SK-N-SH (cell line): ENCODE measurements at regions of chrX and their contacts with region 1.

Region 1: GRCh38 chrX:115690511-115691216 is 129.7 kb downstream of the PLS3 start:
- DNase-seq: peak; percentile 64
- H3K4me3 ChIP-seq: no peak overlapping the region
- H3K27ac ChIP-seq: peak overlapping the region in 1 of 2 experiments; percentile 64; a peak in 2 of 4 replicates
- H3K4me1 ChIP-seq: no peaks in the 10 kb centered on the region
- H3K27me3 ChIP-seq: peaks cover 15% of the 10 kb centered on the region; the same call in 1 of the 2 replicates
- CTCF ChIP-seq: peak; percentile 93
- EP300 ChIP-seq: no peak
- RAD21 ChIP-seq: peak; percentile 66

Region 2: GRCh38 chrX:115392031-115392430 is 298.6 kb before region 1 on chrX:
- CTCF ChIA-PET with region 1: no interaction called
- POLR2A ChIA-PET with region 1: no interaction called
- DNase-seq: no peak
- H3K4me3 ChIP-seq: no peak overlapping the region
- H3K27ac ChIP-seq: no peak overlapping the region
- H3K4me1 ChIP-seq: no peaks in the 10 kb centered on the region
- H3K27me3 ChIP-seq: no peaks in the 10 kb centered on the region; the same call in 1 of the 2 replicates
- CTCF ChIP-seq: no peak
- EP300 ChIP-seq: no peak
- RAD21 ChIP-seq: no peak

Region 3: DNA sequence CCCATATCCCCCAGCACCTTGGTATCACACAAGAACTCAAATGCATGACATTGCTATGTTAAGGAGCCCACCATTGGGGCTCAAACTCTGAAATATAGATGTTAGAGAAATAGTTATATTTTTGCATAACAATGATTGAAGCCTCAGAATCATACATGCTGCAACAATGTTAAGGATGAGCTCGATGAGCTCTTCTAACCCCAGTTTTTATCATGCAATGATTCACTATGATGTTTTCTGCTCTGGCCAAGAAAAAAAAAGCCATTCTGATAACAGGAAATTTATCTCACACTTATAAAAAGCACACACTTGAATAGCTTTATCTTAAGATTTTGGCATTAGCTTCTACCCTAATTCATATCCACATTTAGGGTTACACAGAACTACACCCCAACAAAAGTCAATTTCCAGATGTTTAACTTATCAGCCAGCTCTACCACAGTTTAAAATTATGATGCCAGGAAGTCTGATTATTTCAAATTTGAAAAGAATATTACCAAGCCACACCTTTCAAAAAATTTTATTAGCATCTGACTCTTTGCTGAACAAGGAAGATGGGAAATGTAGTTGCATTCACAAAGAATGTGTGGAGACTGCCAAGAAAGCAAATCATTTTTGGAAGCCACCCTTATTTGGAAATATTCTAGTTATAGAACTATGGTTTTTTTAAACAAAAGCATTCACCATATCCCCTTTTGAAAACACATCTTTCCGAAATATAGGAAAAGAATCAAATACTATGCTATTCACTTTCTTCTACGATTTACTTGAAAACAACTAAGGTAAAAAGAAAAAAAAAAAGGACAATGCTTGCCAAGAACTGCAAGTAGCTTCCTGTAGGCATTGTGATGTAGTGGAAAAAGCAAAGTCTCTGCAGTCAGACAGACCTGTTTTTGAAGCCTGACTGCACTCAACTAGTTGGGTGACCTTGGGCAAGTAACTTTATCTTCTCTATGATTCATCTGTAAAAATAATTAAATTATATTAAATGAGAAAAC is 230.5 kb before region 1 on chrX:
- CTCF ChIA-PET with region 1: no interaction called
- POLR2A ChIA-PET with region 1: no interaction called
- DNase-seq: no peak
- H3K4me3 ChIP-seq: no peak overlapping the region
- H3K27ac ChIP-seq: peak overlapping the region in 1 of 2 experiments; percentile 2; a peak in 2 of 4 replicates
- H3K4me1 ChIP-seq: no peaks in the 10 kb centered on the region
- H3K27me3 ChIP-seq: 0 out of 2 replicates have a peak, but pooled peaks cover 6% of the 10 kb centered on the region
- CTCF ChIP-seq: no peak
- EP300 ChIP-seq: no peak
- RAD21 ChIP-seq: no peak

Region 4: DNA sequence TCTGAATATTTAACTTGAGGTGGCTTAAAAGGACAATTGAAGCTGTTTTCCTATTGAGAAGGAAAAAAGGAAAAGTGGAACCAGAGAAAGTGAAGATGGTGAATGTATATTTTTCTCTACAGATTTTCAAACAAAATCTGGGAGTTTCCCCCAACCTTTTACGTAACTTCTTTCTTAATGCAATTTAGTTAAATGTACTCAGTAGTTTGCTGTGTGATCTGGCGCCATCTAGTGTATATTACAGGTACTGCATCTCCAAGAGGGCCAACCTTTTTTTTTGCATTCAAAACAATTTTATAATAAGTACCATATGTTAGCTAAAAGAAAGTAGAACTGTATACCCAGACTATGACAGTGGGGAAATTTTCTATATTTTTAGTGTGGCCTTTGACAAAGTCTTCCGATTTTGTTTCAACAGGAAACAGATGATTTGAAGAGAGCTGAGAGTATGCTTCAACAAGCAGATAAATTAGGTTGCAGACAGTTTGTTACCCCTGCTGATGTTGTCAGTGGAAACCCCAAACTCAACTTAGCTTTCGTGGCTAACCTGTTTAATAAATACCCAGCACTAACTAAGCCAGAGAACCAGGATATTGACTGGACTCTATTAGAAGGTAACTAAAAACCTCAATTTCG is 47.7 kb before region 1 on chrX:
- CTCF ChIA-PET with region 1: interaction called, 11 read pairs
- POLR2A ChIA-PET with region 1: no interaction called
- DNase-seq: peak; percentile 48
- H3K4me3 ChIP-seq: peak overlapping the region in 1 of 2 experiments; percentile 33; a peak in 1 of 4 replicates
- H3K27ac ChIP-seq: peak overlapping the region; percentile 34 to 51; a peak in 1 of 4 replicates
- H3K4me1 ChIP-seq: no peaks in the 10 kb centered on the region; a peak in 1 of 4 replicates
- H3K27me3 ChIP-seq: peaks cover 3% of the 10 kb centered on the region; the same call in 1 of the 2 replicates
- CTCF ChIP-seq: peak; percentile 98
- EP300 ChIP-seq: no peak
- RAD21 ChIP-seq: peak; percentile 90

Region 5: DNA sequence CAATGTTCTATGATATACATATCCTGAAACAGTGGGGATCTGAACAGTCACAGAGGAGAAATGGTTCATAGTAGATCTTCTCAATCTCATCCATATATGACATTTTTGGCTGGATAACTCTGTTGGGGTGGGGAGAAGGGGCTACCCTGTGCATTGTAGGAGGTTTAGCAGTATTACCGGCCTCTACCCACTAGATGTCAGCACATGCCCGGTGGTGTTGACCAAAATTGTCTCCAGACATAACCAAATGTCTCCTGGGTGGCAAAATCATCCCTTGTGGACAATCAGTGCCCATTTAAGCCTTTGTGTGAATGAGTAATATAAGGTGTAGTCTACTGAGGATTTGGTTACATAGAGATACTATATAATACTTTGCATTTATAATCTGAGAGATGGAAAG is 39.7 kb before region 1 on chrX:
- CTCF ChIA-PET with region 1: interaction called, 37 read pairs
- POLR2A ChIA-PET with region 1: no interaction called
- DNase-seq: peak; percentile 52
- H3K4me3 ChIP-seq: no peak overlapping the region
- H3K27ac ChIP-seq: no peak overlapping the region
- H3K4me1 ChIP-seq: no peaks in the 10 kb centered on the region
- H3K27me3 ChIP-seq: no peaks in the 10 kb centered on the region; the same call in 1 of the 2 replicates
- CTCF ChIP-seq: peak; percentile 77
- EP300 ChIP-seq: no peak
- RAD21 ChIP-seq: peak; percentile 81

Region 6: GRCh38 chrX:115665122-115665521 is 25.5 kb before region 1 on chrX:
- CTCF ChIA-PET with region 1: interaction called, 12 read pairs
- POLR2A ChIA-PET with region 1: no interaction called
- DNase-seq: no peak
- H3K4me3 ChIP-seq: no peak overlapping the region
- H3K27ac ChIP-seq: no peak overlapping the region
- H3K4me1 ChIP-seq: no peaks in the 10 kb centered on the region
- H3K27me3 ChIP-seq: no peaks in the 10 kb centered on the region
- CTCF ChIP-seq: no peak
- EP300 ChIP-seq: no peak
- RAD21 ChIP-seq: no peak

Region 7: GRCh38 chrX:115679460-115679859 is 11.2 kb before region 1 on chrX:
- CTCF ChIA-PET with region 1: interaction called, 44 read pairs
- POLR2A ChIA-PET with region 1: no interaction called
- DNase-seq: peak; percentile 61
- H3K4me3 ChIP-seq: no peak overlapping the region
- H3K27ac ChIP-seq: no peak overlapping the region
- H3K4me1 ChIP-seq: no peaks in the 10 kb centered on the region
- H3K27me3 ChIP-seq: peaks cover 16% of the 10 kb centered on the region
- CTCF ChIP-seq: peak; percentile 61
- EP300 ChIP-seq: no peak
- RAD21 ChIP-seq: peak; percentile 62